WTC11 (cell line): ENCODE measurements at regions of chr22 and their contacts with region 1.

Region 1: DNA sequence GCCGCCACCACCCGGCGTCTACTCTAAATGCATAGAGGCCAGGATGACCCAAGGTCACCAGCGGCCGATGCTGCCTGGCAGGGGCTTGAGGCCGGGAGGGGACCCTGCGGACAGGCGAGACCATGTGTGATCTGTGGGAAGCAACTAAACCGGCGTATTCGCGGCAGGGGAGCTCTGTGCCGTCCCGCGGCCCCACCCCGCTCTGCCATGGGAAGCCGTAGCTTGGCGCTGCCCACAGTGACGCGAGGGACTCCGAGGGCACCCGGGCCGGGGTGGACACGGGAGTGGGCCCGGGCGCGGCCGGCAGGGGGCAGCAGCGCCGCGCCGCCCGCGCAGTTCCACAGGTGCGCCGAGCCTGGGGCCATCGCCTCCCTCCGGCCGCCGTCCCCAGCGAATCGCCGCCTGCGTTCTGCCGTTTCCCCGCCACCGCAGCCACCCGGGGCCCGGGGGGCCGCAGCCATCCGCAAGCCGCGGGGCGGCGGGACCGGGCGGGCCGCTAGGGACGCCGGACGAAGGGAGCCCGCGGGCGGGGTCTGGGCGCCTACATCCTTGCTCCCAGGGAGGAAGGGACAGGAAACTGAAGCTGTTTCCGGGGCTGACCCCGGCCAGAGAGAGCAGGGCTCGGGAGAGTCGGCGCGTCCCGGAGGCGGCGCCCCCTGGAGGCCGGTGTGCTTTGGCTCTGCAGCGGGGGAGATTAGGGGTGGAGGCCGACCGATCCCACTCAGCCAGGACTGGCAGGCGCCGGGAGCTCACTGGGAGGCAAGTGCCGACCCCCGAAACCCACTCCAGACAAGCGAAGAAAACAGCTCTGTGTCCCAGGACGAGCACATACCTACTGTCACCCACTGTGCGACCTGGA is 12.5 kb upstream of the HDHD5 start:
- DNase-seq: peak; percentile 95
- ATAC-seq: peak; percentile 85
- H3K4me3 Mint-ChIP-seq: peak overlapping the region; percentile 67
- H3K27ac Mint-ChIP-seq: peak overlapping the region; percentile 96
- H3K4me1 Mint-ChIP-seq: peaks cover 19% of the 10 kb centered on the region
- H3K27me3 Mint-ChIP-seq: peaks cover 3% of the 10 kb centered on the region; the same call in 1 of the 2 replicates
- CTCF ChIP-seq: peak; percentile 94

Region 2: DNA sequence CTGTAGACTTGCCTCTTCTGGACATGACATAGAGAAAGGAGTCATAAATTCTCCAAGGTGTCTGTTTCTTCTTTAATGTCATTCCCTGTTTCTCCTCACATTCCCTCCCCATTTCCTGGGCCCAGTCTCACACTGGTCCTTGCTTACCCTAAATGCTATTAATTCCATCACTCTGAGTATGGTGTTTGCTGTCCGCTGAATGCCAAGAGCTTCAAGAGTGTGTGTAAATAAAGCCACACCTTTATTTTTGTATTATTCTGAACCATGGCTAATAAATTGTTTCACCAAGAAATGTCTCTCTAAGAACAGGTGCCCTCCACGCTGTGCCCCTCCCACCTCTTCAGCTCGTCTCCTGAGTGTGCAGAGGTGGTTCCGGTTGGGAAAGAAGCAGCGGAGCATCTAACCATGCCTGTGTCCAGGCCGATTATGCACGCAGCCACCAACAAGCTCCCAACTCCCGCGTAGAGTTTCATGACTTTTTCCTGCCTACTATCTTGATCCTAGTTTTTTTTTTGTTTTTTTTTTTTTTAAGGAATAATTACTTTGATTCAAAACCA is 59.0 kb before region 1 on chr22:
- CTCF ChIA-PET with region 1: interaction called, 13 read pairs
- POLR2A ChIA-PET with region 1: no interaction called
- DNase-seq: no peak
- ATAC-seq: no peak
- H3K4me3 Mint-ChIP-seq: no peak overlapping the region
- H3K27ac Mint-ChIP-seq: no peak overlapping the region; the same call in 1 of the 2 replicates
- H3K4me1 Mint-ChIP-seq: peaks cover 14% of the 10 kb centered on the region
- H3K27me3 Mint-ChIP-seq: no peaks in the 10 kb centered on the region
- CTCF ChIP-seq: no peak

Region 3: DNA sequence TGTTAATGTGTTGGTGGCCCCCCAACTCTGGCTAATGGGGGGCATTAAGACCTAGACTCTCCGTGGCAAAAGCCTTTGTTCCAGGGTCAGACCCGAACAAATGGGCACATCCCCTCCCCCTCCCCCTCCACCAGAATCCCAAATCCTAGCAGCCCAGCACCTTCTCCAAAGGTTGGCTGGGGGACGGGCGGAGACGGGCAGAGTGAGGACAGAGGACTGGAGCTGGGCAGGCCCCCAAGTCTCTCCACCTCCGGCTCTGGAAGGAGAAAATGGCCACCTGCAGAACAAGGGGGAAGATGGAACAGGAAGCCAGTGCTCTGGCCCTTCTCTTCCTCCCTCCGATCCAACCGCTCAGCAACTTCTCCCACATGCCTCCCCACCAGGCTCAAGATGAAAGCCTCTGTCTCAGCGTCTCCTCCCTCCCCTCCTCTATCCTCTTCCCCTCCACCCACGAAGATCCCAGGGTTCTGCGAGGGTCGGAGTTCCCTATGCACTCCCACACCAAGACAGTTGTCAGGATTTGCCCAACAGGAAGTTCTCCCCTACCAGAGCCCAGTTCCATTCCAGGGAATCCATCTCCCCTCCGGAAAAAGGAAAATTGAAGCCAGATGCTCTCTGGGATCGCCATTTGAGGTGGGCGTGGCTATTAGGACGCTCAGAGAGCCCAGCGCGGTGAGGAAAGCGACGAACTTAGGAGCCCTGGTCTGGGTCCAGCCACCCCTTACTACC is 27.6 kb after region 1 on chr22:
- CTCF ChIA-PET with region 1: interaction called, 215 read pairs
- POLR2A ChIA-PET with region 1: no interaction called
- DNase-seq: peak; percentile 64
- ATAC-seq: peak; percentile 59
- H3K4me3 Mint-ChIP-seq: peak overlapping the region; percentile 61
- H3K27ac Mint-ChIP-seq: peak overlapping the region; percentile 89
- H3K4me1 Mint-ChIP-seq: peaks cover 69% of the 10 kb centered on the region
- H3K27me3 Mint-ChIP-seq: peaks cover 7% of the 10 kb centered on the region; the same call in 1 of the 2 replicates
- CTCF ChIP-seq: no peak

Region 4: GRCh38 chr22:17243524-17243923 is 72.0 kb after region 1 on chr22:
- CTCF ChIA-PET with region 1: interaction called, 13 read pairs
- POLR2A ChIA-PET with region 1: interaction called, 8 read pairs
- DNase-seq: no peak
- ATAC-seq: no peak
- H3K4me3 Mint-ChIP-seq: no peak overlapping the region
- H3K27ac Mint-ChIP-seq: no peak overlapping the region; the same call in 1 of the 2 replicates
- H3K4me1 Mint-ChIP-seq: peaks cover 22% of the 10 kb centered on the region
- H3K27me3 Mint-ChIP-seq: no peaks in the 10 kb centered on the region
- CTCF ChIP-seq: no peak

Region 5: GRCh38 chr22:17307566-17307965 is 136.0 kb after region 1 on chr22:
- CTCF ChIA-PET with region 1: interaction called, 12 read pairs
- POLR2A ChIA-PET with region 1: interaction called, 3 read pairs
- DNase-seq: no peak
- ATAC-seq: peak; percentile 70
- H3K4me3 Mint-ChIP-seq: no peak overlapping the region
- H3K27ac Mint-ChIP-seq: peak overlapping the region; percentile 77
- H3K4me1 Mint-ChIP-seq: peaks cover 18% of the 10 kb centered on the region
- H3K27me3 Mint-ChIP-seq: no peaks in the 10 kb centered on the region; the same call in 1 of the 2 replicates
- CTCF ChIP-seq: no peak

Region 6: DNA sequence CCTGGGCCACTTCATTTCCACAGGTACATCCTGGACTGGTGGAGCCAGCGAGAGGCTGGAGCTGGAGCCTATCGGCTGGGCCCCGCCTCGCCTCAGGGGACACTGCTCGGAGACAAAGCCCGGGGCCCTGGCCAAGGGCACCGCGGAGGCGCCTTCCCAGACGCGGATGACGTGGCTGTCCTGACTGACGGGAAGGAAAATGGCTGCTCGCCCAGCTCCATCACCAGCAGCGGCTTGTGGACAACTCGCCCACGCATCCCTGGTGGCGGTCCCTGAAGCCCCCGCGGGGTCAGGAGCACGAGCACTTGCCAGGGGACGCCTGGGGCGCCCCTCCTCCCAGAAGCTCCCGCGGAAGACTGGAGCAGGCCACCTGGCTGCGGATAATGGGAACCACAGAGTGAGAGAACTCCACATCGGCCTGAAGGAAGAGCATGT is 247.4 kb after region 1 on chr22:
- CTCF ChIA-PET with region 1: interaction called, 14 read pairs
- POLR2A ChIA-PET with region 1: no interaction called
- DNase-seq: peak; percentile 50
- ATAC-seq: peak; percentile 74
- H3K4me3 Mint-ChIP-seq: no peak overlapping the region
- H3K27ac Mint-ChIP-seq: peak overlapping the region; percentile 83
- H3K4me1 Mint-ChIP-seq: peaks cover 78% of the 10 kb centered on the region
- H3K27me3 Mint-ChIP-seq: no peaks in the 10 kb centered on the region
- CTCF ChIP-seq: no peak